Colonic mucosa (tissue), 4 donors: ENCODE measurements at regions of chr13 and their contacts with region 1.

Region 1: GRCh38 chr13:44431150-44431549 is 57.5 kb downstream of the SERP2 start:
- DNase-seq: peak; percentile 78
- H3K4me3 ChIP-seq: no peak overlapping the region
- H3K27ac ChIP-seq: peak overlapping the region; percentile 34
- H3K4me1 ChIP-seq: no peaks in the 10 kb centered on the region
- H3K27me3 ChIP-seq: no peaks in the 10 kb centered on the region
- CTCF ChIP-seq: no peak

Region 2: GRCh38 chr13:44141725-44142539 is 289.2 kb before region 1 on chr13:
- intact Hi-C with region 1: no loop called
- DNase-seq: peak; percentile 97
- H3K4me3 ChIP-seq: peak overlapping the region; percentile 39
- H3K27ac ChIP-seq: peak overlapping the region; percentile 90
- H3K4me1 ChIP-seq: peaks cover 7% of the 10 kb centered on the region
- H3K27me3 ChIP-seq: no peaks in the 10 kb centered on the region
- CTCF ChIP-seq: no peak

Region 3: GRCh38 chr13:44373601-44374348 is 57.4 kb before region 1 on chr13 and contains the start of gene SERP2:
- intact Hi-C with region 1: loop called (anchors 5 kb)
- DNase-seq: no peak
- H3K4me3 ChIP-seq: peak within 1 kb of the TSS; percentile 56
- H3K27ac ChIP-seq: no peak within 1 kb of the TSS
- H3K4me1 ChIP-seq: no peaks in the 10 kb centered on the region
- H3K27me3 ChIP-seq: no peaks in the 10 kb centered on the region
- CTCF ChIP-seq: no peak
- total RNA-seq, gene SERP2: 1.6 to 2.7 TPM

Region 4: DNA sequence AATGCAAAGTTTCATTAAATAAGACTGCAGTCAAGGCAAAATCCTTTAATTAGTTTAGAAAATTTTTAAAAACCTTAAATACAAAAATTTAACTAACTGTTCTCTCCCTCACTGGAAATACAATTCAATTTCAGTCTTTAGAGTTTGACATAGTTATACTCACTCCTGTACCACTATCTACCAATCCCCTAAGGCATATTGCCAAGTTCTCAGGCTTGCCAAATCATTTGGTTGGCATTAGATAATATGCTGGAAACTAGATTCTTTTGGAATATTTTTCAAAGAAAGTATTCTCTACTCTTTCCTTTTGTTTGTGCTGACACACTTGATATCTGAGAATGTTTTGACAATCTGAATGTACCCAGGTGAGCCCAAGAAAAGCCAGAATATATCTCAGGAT is 67.8 kb after region 1 on chr13:
- intact Hi-C with region 1: no loop called
- DNase-seq: no peak
- H3K4me3 ChIP-seq: no peak overlapping the region
- H3K27ac ChIP-seq: no peak overlapping the region
- H3K4me1 ChIP-seq: no peaks in the 10 kb centered on the region
- H3K27me3 ChIP-seq: no peaks in the 10 kb centered on the region
- CTCF ChIP-seq: no peak